ENCODE measurements at regions of chr17 and their contacts with region 1.

Region 1: GRCh38 chr17:42294469-42295398 is 6.4 kb downstream of the STAT5A start:
- DNase-seq: no peak
- ATAC-seq: no peak
- H3K4me3 Mint-ChIP-seq: no peak overlapping the region
- H3K27ac Mint-ChIP-seq: peak overlapping the region; percentile 74
- H3K4me1 Mint-ChIP-seq: peaks cover 40% of the 10 kb centered on the region
- H3K27me3 Mint-ChIP-seq: no peaks in the 10 kb centered on the region
- CTCF ChIP-seq: no peak

Region 2: DNA sequence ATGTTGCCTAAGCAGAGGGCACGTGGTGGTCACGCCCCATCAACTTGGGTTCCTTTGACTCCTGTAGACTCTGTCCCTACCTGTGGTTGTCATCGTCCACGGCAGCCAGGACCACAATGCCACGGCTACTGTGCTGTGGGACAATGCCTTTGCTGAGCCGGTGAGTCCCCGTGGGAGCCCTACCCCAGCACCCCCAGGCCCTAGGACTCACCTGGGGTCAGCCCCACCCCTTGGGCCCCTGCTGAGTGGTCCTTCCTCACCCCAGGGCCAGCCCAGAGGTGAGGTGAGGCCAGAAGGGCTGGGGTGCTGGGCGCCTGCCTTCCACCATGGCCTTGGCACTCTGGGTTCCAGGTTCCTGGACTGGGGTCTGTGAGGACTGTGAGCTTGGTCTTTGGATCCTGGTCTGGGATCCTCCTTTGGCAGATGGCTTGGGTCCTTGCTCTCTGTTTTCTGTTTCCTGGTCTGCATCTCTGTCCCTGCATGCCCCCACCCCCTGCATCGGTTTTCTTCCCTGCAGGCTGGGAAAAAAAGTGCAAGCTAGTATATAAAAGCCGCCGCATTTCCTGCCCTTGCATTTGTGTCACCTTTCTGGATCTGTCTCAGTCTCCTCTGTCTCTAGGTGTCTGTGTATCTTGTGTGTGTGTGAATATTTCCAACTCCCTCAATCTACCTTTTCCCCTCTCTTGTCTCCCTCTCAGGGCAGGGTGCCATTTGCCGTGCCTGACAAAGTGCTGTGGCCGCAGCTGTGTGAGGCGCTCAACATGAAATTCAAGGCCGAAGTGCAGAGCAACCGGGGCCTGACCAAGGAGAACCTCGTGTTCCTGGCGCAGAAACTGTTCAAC is 11.0 kb after region 1 on chr17:
- CTCF ChIA-PET with region 1: interaction called, 5 read pairs
- POLR2A ChIA-PET with region 1: interaction called, 136 read pairs
- intact Hi-C with region 1: loop called (anchors 2 kb)
- DNase-seq: peak; percentile 30
- ATAC-seq: peak; percentile 12
- H3K4me3 Mint-ChIP-seq: no peak overlapping the region
- H3K27ac Mint-ChIP-seq: peak overlapping the region; percentile 79
- H3K4me1 Mint-ChIP-seq: peaks cover 53% of the 10 kb centered on the region
- H3K27me3 Mint-ChIP-seq: no peaks in the 10 kb centered on the region
- CTCF ChIP-seq: no peak

Measured in activated CD8-positive, alpha-beta T cell treated with anti-CD3 and anti-CD28 coated beads for 36 hours (primary cell).